Testis (tissue), 5 donors: ENCODE measurements at regions of chr17 and their contacts with region 1.

Region 1: GRCh38 chr17:76709077-76709950 is 1.5 kb downstream of the MXRA7 start:
- DNase-seq: peak; percentile 94
- H3K4me3 ChIP-seq: peak overlapping the region; percentile 77 to 85
- H3K27ac ChIP-seq: peak overlapping the region; percentile 93 to 96
- H3K4me1 ChIP-seq: peaks cover 34% of the 10 kb centered on the region
- H3K27me3 ChIP-seq: no peaks in the 10 kb centered on the region
- CTCF ChIP-seq: no peak
- POLR2A ChIP-seq: no peak

Region 2: DNA sequence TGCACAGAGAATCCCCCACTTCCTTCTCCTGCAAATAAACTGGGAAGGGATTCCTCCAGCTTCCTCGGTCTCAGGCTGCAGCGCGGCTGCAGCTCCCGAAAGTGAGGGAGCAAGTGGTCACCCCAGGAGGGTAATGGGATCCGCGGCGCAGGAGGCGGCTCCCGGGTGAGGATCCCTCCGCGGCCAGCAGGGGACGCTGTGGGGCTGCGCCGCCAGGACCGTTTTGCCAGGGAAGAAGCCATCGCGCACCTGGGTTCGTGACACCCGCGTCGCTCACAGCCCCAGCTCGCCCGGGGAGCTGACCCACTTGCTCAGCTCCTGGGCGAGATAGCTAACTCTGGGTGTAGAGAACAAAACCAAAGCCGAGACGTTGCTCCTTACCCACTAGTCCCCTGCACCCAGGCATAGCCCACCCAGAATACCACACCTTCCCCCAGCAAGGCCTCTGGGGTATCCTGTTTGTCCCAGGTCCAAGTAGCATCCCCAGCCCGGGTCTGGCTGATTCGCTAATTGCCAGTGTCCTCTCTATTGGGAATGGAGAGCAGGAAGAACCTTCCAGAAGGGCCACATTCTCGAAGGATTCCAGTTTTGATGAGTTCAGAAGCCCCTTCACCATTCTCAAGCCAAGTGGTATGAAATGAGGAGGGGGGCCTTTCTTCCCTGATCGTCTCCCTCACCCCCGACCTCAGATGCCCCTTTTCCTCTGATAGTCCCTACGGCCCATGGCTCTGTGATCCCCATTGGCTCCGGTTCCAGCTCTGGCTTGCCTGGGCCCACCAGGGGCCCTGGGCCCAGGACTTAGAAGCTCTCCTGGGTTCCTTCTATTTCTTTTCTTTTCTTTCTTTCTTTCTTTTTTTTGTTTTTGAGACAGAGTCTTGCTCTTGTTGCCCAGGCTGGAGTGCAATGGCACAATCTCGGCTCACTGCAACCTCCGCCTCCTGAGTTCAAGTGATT is 186.0 kb before region 1 on chr17:
- intact Hi-C with region 1: loop called (anchors 10 kb)
- DNase-seq: peak; percentile 77
- H3K4me3 ChIP-seq: peak overlapping the region in 1 of 2 donors; percentile 12
- H3K27ac ChIP-seq: no peak overlapping the region
- H3K4me1 ChIP-seq: peaks cover 37% of the 10 kb centered on the region
- H3K27me3 ChIP-seq: no peaks in the 10 kb centered on the region
- CTCF ChIP-seq: peak; percentile 98 to 100 (median 99)
- POLR2A ChIP-seq: no peak

Region 3: DNA sequence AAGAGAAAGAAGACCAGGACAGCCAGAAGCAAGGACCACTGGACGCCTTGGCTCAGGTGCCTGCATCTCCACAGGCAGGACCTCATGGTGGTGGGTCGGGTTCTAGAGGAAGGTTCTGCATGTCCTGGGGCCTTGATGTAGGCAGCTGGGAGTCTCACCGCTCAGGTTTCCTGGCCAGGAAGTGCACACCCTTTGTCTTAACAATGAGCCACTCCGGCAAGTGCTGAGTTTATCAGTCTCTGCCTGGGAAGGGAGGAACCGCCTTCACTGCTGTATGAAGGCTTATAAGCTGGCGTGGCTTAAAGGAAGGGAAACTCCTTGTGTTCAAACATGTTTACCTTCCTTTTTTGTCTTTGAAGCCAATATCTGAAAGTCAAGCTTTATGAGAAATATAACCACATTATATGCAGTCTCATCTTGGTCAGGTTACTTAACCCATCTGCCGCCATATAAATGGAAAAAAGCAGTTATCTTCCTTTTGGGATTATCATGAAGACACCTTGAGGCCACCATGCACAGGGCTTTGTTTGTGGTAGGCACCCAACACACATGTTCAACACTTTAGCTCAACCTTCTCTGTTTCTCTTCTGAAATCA is 65.7 kb before region 1 on chr17 and contains the start of gene ST6GALNAC1:
- intact Hi-C with region 1: no loop called
- DNase-seq: peak; percentile 67
- H3K4me3 ChIP-seq: no peak within 1 kb of the TSS
- H3K27ac ChIP-seq: peak within 1 kb of the TSS in 1 of 2 donors; percentile 60
- H3K4me1 ChIP-seq: peaks cover 6% of the 10 kb centered on the region
- H3K27me3 ChIP-seq: no peaks in the 10 kb centered on the region
- CTCF ChIP-seq: no peak
- POLR2A ChIP-seq: no peak
- total RNA-seq, gene ST6GALNAC1: 20.1 to 20.6 TPM